A673 (cell line): ENCODE measurements at regions of chr7 and their contacts with region 1.

Region 1: GRCh38 chr7:24572997-24573625 is at the start of gene PALS2:
- DNase-seq: peak; percentile 83
- H3K4me3 ChIP-seq: peak within 1 kb of the TSS; percentile 70
- H3K27ac ChIP-seq: peak within 1 kb of the TSS; percentile 71
- H3K4me1 ChIP-seq: peaks cover 27% of the 10 kb centered on the region
- H3K27me3 ChIP-seq: peaks cover 4% of the 10 kb centered on the region
- CTCF ChIP-seq: no peak
- total RNA-seq, gene PALS2: 65.3 and 68.4 TPM in 2 replicates

Region 2: GRCh38 chr7:23863209-23863798 is 709.8 kb before region 1 on chr7:
- CTCF ChIA-PET with region 1: no interaction called
- POLR2A ChIA-PET with region 1: no interaction called
- intact Hi-C with region 1: loop called (anchors 10 kb)
- DNase-seq: peak; percentile 65
- H3K4me3 ChIP-seq: no peak overlapping the region
- H3K27ac ChIP-seq: no peak overlapping the region
- H3K4me1 ChIP-seq: no peaks in the 10 kb centered on the region
- H3K27me3 ChIP-seq: no peaks in the 10 kb centered on the region
- CTCF ChIP-seq: peak; percentile 77

Region 3: GRCh38 chr7:24384362-24385030 is 188.6 kb before region 1 on chr7:
- CTCF ChIA-PET with region 1: no interaction called
- POLR2A ChIA-PET with region 1: no interaction called
- intact Hi-C with region 1: no loop called
- DNase-seq: no peak
- H3K4me3 ChIP-seq: no peak overlapping the region
- H3K27ac ChIP-seq: no peak overlapping the region
- H3K4me1 ChIP-seq: no peaks in the 10 kb centered on the region
- H3K27me3 ChIP-seq: no peaks in the 10 kb centered on the region
- CTCF ChIP-seq: no peak

Region 4: GRCh38 chr7:24401628-24402593 is 171.2 kb before region 1 on chr7:
- CTCF ChIA-PET with region 1: no interaction called
- POLR2A ChIA-PET with region 1: no interaction called
- intact Hi-C with region 1: loop called (anchors 10 kb)
- DNase-seq: peak; percentile 41
- H3K4me3 ChIP-seq: peak overlapping the region; percentile 21
- H3K27ac ChIP-seq: no peak overlapping the region
- H3K4me1 ChIP-seq: peaks cover 39% of the 10 kb centered on the region
- H3K27me3 ChIP-seq: no peaks in the 10 kb centered on the region
- CTCF ChIP-seq: peak; percentile 65

Region 5: GRCh38 chr7:24665564-24666294 is 92.6 kb after region 1 on chr7:
- CTCF ChIA-PET with region 1: no interaction called
- POLR2A ChIA-PET with region 1: no interaction called
- intact Hi-C with region 1: loop called (anchors 2 kb)
- DNase-seq: peak; percentile 73
- H3K4me3 ChIP-seq: no peak overlapping the region
- H3K27ac ChIP-seq: no peak overlapping the region
- H3K4me1 ChIP-seq: peaks cover 30% of the 10 kb centered on the region
- H3K27me3 ChIP-seq: no peaks in the 10 kb centered on the region
- CTCF ChIP-seq: peak; percentile 74

Region 6: DNA sequence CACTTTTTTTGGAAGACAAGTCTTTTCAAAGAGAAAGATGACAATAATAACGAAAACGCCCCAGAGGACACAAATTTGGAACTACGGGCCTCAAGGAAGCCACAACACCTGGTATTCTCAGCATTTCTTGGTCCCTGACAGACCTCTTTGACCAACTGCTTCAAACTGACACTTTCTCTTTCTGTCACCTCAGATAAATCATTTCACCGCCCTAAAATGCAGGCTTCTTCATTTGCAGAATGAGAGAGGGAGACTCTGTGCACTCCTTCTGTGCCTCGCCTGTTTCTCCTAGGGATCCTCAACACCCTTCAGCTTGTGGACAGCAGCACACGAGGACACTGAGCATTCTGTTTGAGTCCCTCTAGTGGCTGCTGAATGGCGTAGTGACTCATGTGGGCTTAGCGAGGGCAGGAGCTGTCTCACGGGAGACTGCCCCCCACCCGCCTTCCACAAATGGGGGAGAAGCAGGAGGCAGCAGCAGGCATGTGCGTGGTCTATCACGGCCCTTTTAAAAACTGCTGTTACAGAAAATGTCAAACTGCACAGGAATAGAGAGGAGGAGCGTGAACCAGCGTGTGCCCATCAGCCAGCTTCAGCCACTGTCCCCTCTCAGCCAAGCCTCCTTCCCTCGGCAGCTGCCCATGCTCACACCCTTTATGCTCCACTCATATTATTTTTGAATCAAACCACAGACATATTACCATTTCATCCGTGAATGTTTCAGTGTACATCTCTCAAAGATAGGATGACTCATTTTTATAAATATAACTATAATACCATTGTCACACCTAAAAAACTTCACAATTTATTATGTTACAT is 142.8 kb after region 1 on chr7:
- CTCF ChIA-PET with region 1: interaction called, 10 read pairs
- POLR2A ChIA-PET with region 1: no interaction called
- intact Hi-C with region 1: no loop called
- DNase-seq: peak; percentile 64
- H3K4me3 ChIP-seq: no peak overlapping the region
- H3K27ac ChIP-seq: no peak overlapping the region
- H3K4me1 ChIP-seq: no peaks in the 10 kb centered on the region
- H3K27me3 ChIP-seq: no peaks in the 10 kb centered on the region
- CTCF ChIP-seq: peak; percentile 73